Activated T-helper 1 cell treated with anti-CD3 and anti-CD28 coated beads, Interleukin-12 subunit alpha, Interleukin-12 subunit beta, Interleukin-2, Interleukin-4 antibody, amounts not matched to agents 30 ng/mL and 10 ng/mL and 1 ng/mL, durations not matched to agents 14 hours and 24 hours and 36 hours (primary cell): ENCODE measurements at regions of chr6 and their contacts with region 1.

Region 1: GRCh38 chr6:135183532-135184440 is 2.7 kb downstream of the MYB start:
- DNase-seq: peak; percentile 77
- H3K4me3 Mint-ChIP-seq: peak overlapping the region; percentile 97
- H3K27ac Mint-ChIP-seq: peak overlapping the region; percentile 81
- H3K4me1 Mint-ChIP-seq: peaks cover 47% of the 10 kb centered on the region
- H3K27me3 Mint-ChIP-seq: no peaks in the 10 kb centered on the region

Region 2: DNA sequence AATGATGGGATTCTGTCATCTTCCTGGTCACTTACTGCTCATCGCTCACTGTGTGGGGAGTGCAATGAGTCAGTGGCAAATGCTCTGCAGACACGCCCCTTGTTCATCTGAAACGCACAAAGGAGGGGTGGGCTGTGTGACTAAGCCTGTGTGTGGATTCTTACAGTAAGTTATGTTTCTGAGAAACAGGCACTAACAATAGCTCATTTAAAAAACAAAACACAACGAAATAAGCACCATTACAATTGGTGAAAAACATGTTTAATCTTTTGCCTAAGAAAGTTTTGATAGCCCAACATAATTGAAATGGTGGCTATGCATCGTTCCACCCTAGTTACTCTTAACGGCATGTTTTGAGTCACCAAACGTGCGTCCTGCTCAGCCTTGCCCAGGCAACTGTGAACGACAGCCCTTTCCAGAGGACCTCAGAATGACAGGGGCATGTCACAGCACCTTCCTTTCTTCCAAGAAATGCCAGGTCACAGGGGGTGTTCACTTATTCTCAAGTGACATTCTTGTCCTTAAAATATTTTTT is 747.4 kb before region 1 on chr6:
- intact Hi-C with region 1: loop called (anchors 2 kb)
- DNase-seq: peak; percentile 74
- H3K4me3 Mint-ChIP-seq: peak overlapping the region; percentile 55
- H3K27ac Mint-ChIP-seq: peak overlapping the region; percentile 99
- H3K4me1 Mint-ChIP-seq: peaks cover 41% of the 10 kb centered on the region
- H3K27me3 Mint-ChIP-seq: no peaks in the 10 kb centered on the region

Region 3: GRCh38 chr6:135014353-135014832 is 169.4 kb before region 1 on chr6:
- intact Hi-C with region 1: loop called (anchors 1 kb)
- DNase-seq: no peak
- H3K4me3 Mint-ChIP-seq: peak overlapping the region; percentile 54
- H3K27ac Mint-ChIP-seq: peak overlapping the region; percentile 92
- H3K4me1 Mint-ChIP-seq: peaks cover 57% of the 10 kb centered on the region
- H3K27me3 Mint-ChIP-seq: no peaks in the 10 kb centered on the region

Region 4: DNA sequence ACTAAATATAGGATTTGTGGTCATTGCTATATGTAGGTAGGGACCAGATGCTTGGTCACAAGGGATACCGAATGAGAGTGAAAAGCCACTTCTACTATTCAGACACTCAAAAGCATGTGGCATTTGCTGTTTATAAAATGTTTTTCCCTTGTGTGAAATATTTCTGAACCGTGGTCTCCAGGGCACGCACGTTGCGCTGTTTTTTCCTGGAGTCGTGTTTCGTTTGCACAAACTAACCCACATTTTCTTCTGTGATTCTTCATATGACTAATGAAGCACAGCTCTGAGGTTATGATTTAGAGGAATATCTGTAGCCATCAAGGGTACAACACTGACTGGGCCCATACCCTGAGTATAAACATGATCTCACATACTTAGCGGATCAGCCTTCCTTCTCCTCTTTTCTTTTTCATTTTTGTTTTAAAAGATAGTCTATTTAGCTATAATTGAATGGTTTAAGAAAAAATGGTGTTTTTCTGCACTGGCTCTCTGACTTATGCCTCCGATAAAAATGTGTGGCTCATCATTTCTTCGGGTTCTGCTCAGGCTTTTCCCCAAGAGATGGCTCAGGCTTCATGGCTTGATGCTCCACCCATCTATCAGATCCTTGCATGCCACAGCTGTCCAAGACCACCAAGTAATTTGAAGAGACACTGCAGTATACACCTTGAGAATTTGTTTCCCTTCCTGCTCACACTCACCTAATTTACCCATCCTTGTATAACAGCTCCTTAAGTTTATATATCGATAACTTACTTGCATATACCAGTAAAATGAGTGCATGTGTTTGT is 69.2 kb before region 1 on chr6:
- intact Hi-C with region 1: loop called (anchors 1 kb)
- DNase-seq: peak; percentile 53
- H3K4me3 Mint-ChIP-seq: peak overlapping the region; percentile 66
- H3K27ac Mint-ChIP-seq: peak overlapping the region; percentile 97
- H3K4me1 Mint-ChIP-seq: peaks cover 88% of the 10 kb centered on the region
- H3K27me3 Mint-ChIP-seq: no peaks in the 10 kb centered on the region

Region 5: DNA sequence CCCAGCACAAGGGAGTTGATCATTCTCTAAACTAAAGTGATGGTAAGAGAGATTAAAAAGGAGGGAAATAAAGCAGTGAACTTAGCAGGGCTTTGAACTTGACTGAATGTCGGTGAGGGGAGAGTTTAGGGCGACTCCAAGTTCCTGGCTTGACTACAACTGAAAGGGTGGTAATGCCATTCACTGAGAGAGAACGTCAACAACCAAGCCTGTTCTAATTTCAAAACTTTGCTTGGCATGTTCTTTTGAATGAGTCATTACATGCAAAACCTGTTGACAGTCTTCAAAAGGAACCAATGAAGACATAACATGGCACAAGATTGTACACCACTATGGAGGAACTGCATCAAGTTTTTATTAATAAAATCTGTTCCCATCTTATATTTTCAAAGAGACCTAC is 12.9 kb before region 1 on chr6:
- intact Hi-C with region 1: loop called (anchors 1 kb)
- DNase-seq: peak; percentile 16
- H3K4me3 Mint-ChIP-seq: peak overlapping the region; percentile 38
- H3K27ac Mint-ChIP-seq: peak overlapping the region; percentile 75
- H3K4me1 Mint-ChIP-seq: peaks cover 50% of the 10 kb centered on the region
- H3K27me3 Mint-ChIP-seq: no peaks in the 10 kb centered on the region

Region 6: DNA sequence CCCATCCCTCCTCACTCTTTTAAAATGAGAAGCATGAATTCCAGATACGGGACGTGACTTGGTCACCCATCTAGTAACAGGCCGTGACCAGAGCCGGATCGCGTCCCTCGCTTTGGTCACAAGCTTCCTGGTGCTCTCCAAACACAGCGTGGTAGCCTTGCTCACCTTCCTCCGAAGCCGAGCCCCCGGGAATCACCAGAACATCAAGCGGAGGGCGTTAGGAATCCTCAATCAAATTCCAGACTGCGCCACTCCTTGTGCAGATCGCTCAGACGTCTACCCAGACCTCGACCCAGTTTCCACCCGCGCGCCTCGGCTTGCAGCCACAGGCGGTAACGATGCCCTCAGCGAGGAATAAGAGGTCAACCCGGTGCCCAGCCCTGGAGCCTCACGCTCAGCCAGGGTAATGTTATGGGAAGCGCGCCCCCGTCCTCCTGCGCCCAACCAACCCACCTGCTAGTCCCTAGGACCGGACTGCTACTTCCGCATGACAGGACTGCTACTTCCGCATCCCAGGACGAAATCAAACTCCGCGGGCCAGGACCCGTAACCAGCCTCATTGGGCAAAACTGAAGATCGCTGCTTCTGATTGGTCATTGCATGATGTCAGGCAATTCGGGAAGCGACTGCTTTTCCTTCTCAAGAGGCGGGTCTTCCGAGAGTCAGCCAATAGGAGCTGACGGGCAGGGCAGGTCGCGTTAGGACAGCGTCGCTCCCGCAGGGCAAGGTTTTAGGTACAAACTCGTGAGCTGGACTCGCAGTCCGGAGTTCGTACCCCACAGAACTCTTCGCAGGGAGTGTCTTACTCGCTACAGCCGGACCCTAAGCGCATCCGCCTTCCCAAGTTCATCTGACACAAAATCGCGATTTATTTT is 1066.3 kb after region 1 on chr6 and contains the start of gene MTFR2:
- intact Hi-C with region 1: loop called (anchors 10 kb)
- DNase-seq: peak; percentile 95
- H3K4me3 Mint-ChIP-seq: peak within 1 kb of the TSS; percentile 98
- H3K27ac Mint-ChIP-seq: peak within 1 kb of the TSS; percentile 92
- H3K4me1 Mint-ChIP-seq: peaks cover 66% of the 10 kb centered on the region
- H3K27me3 Mint-ChIP-seq: no peaks in the 10 kb centered on the region
- total RNA-seq, gene MTFR2: 23.3 and 27.6 TPM in 2 replicates